MCF 10A (cell line): ENCODE measurements at regions of chr1 and their contacts with region 1.

Region 1: DNA sequence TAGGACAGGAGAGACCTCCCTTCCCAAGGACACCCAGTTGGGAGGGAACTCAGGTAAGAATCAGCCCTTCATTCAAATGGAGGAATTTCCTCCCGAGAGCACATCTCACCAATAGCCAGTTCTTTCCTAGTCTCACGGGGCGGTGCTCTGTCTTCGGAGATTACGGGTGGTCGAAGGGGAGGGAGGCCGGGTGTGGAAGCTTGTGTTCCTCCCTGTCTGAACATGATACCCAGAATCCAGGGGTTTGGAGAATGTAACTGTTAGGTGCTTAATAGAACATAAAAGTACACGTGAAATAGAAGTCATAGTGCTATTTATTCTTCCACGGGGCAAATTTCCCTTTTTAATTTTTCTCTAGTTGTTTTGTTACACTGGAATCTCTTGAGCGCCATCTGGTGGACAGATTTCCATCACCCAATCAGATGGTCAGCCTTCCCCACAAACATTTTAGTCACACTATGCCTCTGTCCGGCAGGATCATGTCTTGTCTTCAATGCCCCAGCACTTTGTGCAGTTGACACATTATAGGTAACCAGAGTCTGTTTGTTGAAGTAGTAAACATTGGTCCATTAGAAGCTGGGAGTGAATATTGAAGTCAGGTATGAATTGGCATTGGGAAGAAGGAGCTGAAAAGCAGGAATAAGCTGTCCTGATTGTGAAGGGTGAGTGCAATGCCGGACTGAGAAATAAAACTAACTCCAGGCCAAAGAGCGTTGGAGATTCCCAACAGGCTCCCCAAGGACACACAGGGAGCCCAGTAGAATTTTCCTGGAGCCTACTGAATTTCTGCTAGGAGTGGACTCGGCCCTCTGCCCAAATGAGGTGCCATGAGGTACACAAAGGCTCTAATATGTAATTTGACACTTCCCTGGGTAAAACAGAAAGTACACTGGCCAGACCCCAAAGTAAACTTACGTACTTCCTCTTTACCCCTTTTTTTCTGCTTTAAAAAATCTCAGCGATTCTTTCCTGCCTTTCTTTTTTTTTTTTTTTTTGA is 27.6 kb upstream of the ZNF697 start:
- DNase-seq: peak; percentile 92
- H3K4me3 Mint-ChIP-seq: peak overlapping the region; percentile 67
- H3K27ac Mint-ChIP-seq: peak overlapping the region; percentile 28
- H3K4me1 Mint-ChIP-seq: peaks cover 21% of the 10 kb centered on the region
- H3K27me3 Mint-ChIP-seq: no peaks in the 10 kb centered on the region
- CTCF ChIP-seq: peak; percentile 77

Region 2: DNA sequence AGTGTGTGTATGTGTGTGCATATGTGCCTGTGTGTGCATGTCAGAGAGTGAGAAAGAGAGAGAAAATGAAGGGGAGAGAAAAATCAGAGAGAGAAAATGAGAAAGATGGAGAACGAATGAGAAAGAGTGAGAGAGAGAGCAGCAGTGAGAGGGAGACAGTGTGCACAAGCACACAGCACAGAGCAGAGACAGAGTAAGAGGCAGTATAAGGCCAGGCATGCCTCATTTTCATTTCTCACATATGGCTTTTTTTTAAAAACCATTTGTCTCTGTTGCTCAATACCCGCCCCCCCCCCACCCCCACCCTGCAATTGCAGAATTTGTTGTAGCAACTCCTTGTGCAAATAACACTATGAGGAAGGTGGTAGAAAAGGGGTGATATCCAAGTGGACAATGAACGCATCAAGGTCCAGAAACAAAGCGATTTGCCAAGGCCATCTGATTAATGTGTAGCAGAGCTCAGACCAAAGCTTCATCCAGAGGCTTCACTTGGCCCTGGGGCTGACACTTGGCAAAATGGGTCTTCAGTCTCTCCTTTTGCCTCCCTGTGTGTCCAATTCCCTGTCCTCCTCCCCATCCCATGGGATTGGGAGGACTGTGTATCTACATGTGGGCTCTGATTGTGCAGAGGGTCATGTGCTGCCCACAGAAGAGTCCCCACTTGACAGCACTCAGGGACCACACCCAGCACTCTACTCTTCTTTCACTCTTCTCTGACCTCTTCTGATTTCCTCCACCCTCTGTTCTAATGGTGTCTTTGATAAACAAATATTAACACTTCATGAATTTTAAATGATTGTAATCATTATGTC is 207.6 kb before region 1 on chr1:
- CTCF ChIA-PET with region 1: no interaction called
- POLR2A ChIA-PET with region 1: no interaction called
- intact Hi-C with region 1: no loop called
- DNase-seq: no peak
- H3K4me3 Mint-ChIP-seq: no peak overlapping the region
- H3K27ac Mint-ChIP-seq: no peak overlapping the region
- H3K4me1 Mint-ChIP-seq: peaks cover 21% of the 10 kb centered on the region
- H3K27me3 Mint-ChIP-seq: peaks cover 23% of the 10 kb centered on the region
- CTCF ChIP-seq: no peak

Region 3: DNA sequence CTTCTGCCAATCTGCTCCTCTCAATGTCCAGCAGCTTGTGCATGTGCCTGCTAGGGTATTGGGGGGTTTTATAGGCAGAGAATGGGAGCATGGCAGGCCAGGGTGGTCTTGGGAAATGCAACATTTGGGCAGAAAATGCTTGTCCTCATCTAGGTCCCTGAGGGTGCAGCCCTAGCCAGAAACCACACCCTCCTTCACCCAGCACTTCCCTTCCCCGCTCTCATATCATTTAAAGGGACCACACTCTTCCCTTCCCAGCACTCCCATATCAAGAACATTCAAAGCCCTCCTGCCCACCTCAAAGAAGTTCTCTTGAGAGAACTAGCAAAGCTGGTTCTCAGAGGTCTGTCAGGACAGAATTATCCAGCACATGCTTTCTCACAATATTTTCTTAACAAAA is 106.6 kb before region 1 on chr1:
- CTCF ChIA-PET with region 1: no interaction called
- POLR2A ChIA-PET with region 1: no interaction called
- intact Hi-C with region 1: no loop called
- DNase-seq: no peak
- H3K4me3 Mint-ChIP-seq: no peak overlapping the region
- H3K27ac Mint-ChIP-seq: no peak overlapping the region
- H3K4me1 Mint-ChIP-seq: peaks cover 17% of the 10 kb centered on the region
- H3K27me3 Mint-ChIP-seq: no peaks in the 10 kb centered on the region
- CTCF ChIP-seq: no peak

Region 4: GRCh38 chr1:119631433-119632102 is 44.1 kb before region 1 on chr1:
- CTCF ChIA-PET with region 1: interaction called, 260 read pairs
- POLR2A ChIA-PET with region 1: interaction called, 7 read pairs
- intact Hi-C with region 1: no loop called
- DNase-seq: peak; percentile 83
- H3K4me3 Mint-ChIP-seq: peak overlapping the region; percentile 38
- H3K27ac Mint-ChIP-seq: no peak overlapping the region
- H3K4me1 Mint-ChIP-seq: peaks cover 9% of the 10 kb centered on the region
- H3K27me3 Mint-ChIP-seq: no peaks in the 10 kb centered on the region
- CTCF ChIP-seq: no peak

Region 5: DNA sequence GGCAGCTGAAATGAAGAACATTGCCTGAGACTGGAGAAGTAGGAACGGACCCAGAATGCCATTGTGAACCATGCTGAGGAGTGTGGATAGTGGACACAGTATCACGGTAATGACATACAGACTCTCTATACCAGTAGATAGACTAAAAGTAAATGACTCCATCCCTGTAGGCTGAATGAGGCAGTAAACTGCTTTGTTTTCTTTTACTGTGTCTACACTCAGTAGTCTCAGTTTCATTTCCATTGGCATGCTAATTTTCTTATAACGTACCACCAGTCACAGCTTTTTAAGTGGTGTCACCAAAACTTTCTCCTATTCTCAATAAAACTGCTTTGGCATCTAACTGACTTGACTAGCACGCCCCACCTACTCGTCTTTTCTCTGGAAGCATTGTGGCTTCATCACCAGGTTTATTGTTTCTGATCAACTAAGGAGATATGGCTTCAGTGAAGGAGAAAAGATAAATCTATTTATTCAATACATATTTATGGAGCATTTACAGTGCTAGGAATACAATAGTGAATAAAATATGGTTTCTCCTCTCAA is 19.2 kb before region 1 on chr1:
- CTCF ChIA-PET with region 1: interaction called, 54 read pairs
- POLR2A ChIA-PET with region 1: interaction called, 161 read pairs
- intact Hi-C with region 1: no loop called
- DNase-seq: no peak
- H3K4me3 Mint-ChIP-seq: no peak overlapping the region
- H3K27ac Mint-ChIP-seq: no peak overlapping the region
- H3K4me1 Mint-ChIP-seq: peaks cover 6% of the 10 kb centered on the region
- H3K27me3 Mint-ChIP-seq: peaks cover 11% of the 10 kb centered on the region
- CTCF ChIP-seq: no peak

Region 6: DNA sequence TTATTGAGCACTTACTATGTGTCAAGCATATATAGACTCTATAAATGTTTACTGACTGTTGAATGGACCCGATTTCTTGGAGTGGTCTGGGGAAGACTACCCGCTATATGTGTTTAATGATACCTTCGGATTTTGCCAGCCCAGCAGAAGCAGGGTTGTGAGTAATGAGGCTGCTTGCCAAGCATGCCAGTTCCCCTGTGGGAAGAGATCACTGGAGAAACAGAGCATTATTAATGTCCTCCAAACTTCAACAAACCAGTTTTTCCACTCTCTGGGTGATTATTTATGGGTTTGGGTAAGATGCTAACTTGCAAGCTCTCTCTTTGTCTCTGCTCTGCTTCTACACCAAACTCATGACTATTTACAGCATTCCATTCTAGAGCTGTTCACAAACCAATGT is 11.0 kb after region 1 on chr1:
- CTCF ChIA-PET with region 1: interaction called, 33 read pairs
- POLR2A ChIA-PET with region 1: interaction called, 52 read pairs
- intact Hi-C with region 1: no loop called
- DNase-seq: peak; percentile 59
- H3K4me3 Mint-ChIP-seq: no peak overlapping the region
- H3K27ac Mint-ChIP-seq: no peak overlapping the region
- H3K4me1 Mint-ChIP-seq: peaks cover 19% of the 10 kb centered on the region
- H3K27me3 Mint-ChIP-seq: no peaks in the 10 kb centered on the region
- CTCF ChIP-seq: no peak